ENCODE measurements at regions of chr19 and their contacts with region 1.

Region 1: DNA sequence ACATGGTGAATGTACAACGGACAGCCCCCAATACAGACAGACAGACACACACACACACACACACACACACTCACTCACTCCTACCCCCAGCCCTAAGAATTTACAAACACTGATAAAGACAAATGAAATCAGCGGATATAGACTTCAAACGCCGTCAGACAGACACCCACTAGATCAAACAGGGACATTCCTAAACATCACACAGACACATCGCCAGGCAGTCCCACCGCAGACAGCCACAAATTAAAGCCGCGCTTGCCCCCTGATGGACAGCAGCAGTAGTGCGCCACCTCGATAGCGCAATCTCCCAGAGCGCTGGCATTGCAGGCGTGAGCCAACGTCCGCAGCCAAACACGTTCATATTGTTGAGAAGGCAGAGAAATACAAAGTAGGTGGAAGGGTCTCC is 24.7 kb upstream of the ADGRE1 start:
- DNase-seq: peak; percentile 81
- ATAC-seq: peak; percentile 83
- H3K4me3 ChIP-seq: peak overlapping the region; percentile 28 to 32
- H3K27ac ChIP-seq: no peak overlapping the region
- H3K4me1 ChIP-seq: peaks cover 0 to 8% of the 10 kb centered on the region in 2 experiments; a peak in 2 of 4 replicates
- H3K27me3 ChIP-seq: no peaks in the 10 kb centered on the region
- CTCF ChIP-seq: peak; percentile 85 to 96 (median 92)
- POLR2A ChIP-seq: no peak
- RAD21 ChIP-seq: peak; percentile 99

Region 2: DNA sequence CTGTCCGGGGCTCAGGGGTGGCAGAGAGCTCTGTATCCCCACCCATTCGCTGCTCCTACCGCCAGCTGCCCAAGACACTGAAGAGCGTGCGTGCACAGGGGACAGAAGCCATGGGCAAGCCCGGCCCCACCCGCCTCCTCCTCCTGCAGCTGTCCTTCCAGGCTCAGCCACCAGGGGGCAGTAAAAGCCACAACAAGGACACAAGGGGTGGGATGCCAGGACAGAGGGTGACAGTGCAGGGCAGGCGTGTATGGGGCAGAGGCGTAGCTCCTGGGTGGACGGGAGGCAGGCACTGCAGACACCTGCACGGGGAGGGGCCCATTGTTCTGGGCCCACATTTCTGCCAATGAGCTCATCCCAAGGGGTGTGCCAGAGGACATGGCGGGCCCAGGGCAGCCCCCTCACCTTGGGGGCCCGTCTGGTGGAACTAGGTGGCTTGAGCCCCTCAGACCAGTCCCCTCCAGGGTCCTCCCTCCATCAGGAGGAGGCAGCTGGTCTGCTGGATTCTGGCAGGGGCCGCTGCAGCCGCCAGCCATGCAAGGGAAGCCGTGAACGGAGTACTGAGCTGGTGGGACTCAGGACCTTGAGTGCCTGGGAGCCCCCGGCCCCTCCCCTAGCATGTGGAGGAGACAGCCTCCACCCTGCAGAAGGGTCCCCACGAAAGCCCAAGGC is 644.0 kb before region 1 on chr19:
- CTCF ChIA-PET with region 1: interaction called, 8 read pairs
- POLR2A ChIA-PET with region 1: no interaction called
- RAD21 ChIA-PET with region 1: no interaction called
- intact Hi-C with region 1: loop called (anchors 5 kb)
- DNase-seq: peak; percentile 51
- ATAC-seq: peak; percentile 89
- H3K4me3 ChIP-seq: no peak overlapping the region
- H3K27ac ChIP-seq: no peak overlapping the region
- H3K4me1 ChIP-seq: peaks cover 0 to 8% of the 10 kb centered on the region in 2 experiments; a peak in 1 of 4 replicates
- H3K27me3 ChIP-seq: no peaks in the 10 kb centered on the region
- CTCF ChIP-seq: peak; percentile 78 to 95 (median 88); a peak in 5 of 6 replicates
- POLR2A ChIP-seq: no peak
- RAD21 ChIP-seq: peak; percentile 82

Region 3: GRCh38 chr19:6632002-6632621 is 230.6 kb before region 1 on chr19:
- CTCF ChIA-PET with region 1: interaction called, 6 read pairs
- POLR2A ChIA-PET with region 1: no interaction called
- RAD21 ChIA-PET with region 1: interaction called, 3 to 4 read pairs
- intact Hi-C with region 1: loop called (anchors 1 kb)
- DNase-seq: peak; percentile 77
- ATAC-seq: peak; percentile 71
- H3K4me3 ChIP-seq: no peak overlapping the region
- H3K27ac ChIP-seq: no peak overlapping the region
- H3K4me1 ChIP-seq: peaks cover 3 to 14% of the 10 kb centered on the region in 2 experiments; a peak in 3 of 4 replicates
- H3K27me3 ChIP-seq: no peaks in the 10 kb centered on the region
- CTCF ChIP-seq: peak; percentile 70 to 83 (median 76)
- POLR2A ChIP-seq: no peak
- RAD21 ChIP-seq: peak; percentile 80

Region 4: GRCh38 chr19:6753178-6754031 is 109.3 kb before region 1 on chr19:
- CTCF ChIA-PET with region 1: interaction called, 3 read pairs
- POLR2A ChIA-PET with region 1: no interaction called
- RAD21 ChIA-PET with region 1: no interaction called
- intact Hi-C with region 1: loop called (anchors 1 kb)
- DNase-seq: peak; percentile 91
- ATAC-seq: peak; percentile 88
- H3K4me3 ChIP-seq: peak overlapping the region; percentile 26 to 45
- H3K27ac ChIP-seq: peak overlapping the region; percentile 88
- H3K4me1 ChIP-seq: peaks cover 13 to 31% of the 10 kb centered on the region in 2 experiments; a peak in 3 of 4 replicates
- H3K27me3 ChIP-seq: no peaks in the 10 kb centered on the region
- CTCF ChIP-seq: peak in 2 of 3 experiments; percentile 25 to 43; a peak in 4 of 6 replicates
- POLR2A ChIP-seq: peak; percentile 51
- RAD21 ChIP-seq: peak; percentile 78

Region 5: DNA sequence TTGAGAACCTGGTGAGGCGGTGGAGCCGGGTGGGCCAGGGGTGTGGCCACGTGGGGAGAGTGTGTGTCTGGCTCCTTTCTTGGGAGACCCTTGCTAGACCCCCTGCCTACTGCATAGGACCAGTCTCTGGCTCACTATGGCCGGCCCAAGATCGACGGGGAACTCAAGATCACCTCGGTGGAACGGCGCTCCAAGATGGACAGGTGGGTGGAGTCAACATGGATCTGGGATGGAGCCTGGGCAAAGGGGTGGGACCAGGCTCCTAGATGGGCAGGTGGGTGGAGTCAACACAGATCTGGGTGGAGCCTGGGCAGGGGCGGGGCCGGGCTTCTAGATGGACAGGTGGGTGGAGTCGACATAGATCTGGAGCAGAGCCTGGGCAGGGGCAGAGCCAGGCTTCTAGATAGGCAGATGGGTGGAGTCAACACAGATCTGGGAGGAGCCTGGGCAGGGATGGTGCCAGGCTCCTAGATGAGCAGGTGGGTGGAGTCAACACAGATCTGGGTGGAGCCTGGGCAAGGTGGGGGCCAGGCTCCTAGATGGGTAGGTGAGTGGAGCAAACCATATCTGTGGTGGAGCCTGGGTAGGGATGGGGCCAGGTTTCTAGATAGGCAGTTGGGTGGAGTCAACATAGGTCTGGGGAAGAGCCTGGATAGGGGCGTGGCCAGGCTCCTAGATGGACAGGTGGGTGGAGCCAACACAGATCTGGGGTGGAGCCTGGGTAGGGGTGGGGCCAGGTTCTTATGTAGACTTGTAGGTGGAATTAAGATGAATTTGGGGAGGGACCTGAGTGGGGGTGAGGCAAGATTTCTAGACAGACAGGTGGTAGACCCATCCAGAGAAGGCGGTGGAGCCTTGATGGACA is 33.7 kb before region 1 on chr19:
- CTCF ChIA-PET with region 1: interaction called, 7 read pairs
- POLR2A ChIA-PET with region 1: no interaction called
- RAD21 ChIA-PET with region 1: interaction called, 3 to 5 read pairs
- intact Hi-C with region 1: loop called (anchors 2 kb)
- DNase-seq: peak; percentile 98
- ATAC-seq: peak; percentile 84
- H3K4me3 ChIP-seq: peak overlapping the region; percentile 79 to 84
- H3K27ac ChIP-seq: peak overlapping the region; percentile 67
- H3K4me1 ChIP-seq: peaks cover 14 to 24% of the 10 kb centered on the region in 2 experiments
- H3K27me3 ChIP-seq: no peaks in the 10 kb centered on the region
- CTCF ChIP-seq: no peak
- POLR2A ChIP-seq: no peak
- RAD21 ChIP-seq: no peak

Region 6: DNA sequence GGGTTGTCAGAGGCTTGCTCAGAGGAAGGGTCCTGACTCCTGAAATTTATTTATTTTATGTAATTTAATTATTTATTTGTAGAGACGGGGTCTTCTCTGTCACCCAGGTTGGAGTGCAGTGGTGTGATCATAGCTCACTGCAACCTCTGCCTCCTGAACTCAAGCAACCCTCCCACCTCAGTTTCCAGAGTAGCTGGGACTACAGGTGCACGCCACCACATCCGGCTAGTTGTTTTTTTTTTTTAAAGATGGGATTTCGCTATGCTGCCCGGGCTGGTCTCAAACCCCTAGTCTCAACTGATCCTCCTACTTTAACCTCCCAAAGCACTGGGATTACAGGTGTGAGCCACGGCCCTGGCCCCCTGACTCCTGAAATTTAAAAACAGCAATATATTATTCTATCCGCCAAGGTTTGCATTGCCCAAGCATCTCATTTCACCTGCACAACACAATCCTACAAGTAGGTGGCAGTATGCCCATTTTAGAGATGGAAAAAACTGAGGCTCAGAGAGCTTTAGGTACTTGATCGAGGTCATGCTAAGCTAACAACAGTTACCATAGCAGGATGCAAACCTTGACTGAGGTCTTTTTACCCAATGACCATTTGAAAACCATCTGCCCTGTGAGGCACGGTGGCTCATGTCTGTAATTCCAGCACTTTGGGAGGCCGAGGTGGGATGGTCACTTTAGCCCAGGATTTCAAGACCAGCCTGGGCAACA is 504.2 kb after region 1 on chr19:
- CTCF ChIA-PET with region 1: no interaction called
- POLR2A ChIA-PET with region 1: no interaction called
- RAD21 ChIA-PET with region 1: no interaction called
- intact Hi-C with region 1: no loop called
- DNase-seq: peak; percentile 62
- ATAC-seq: peak; percentile 67
- H3K4me3 ChIP-seq: no peak overlapping the region
- H3K27ac ChIP-seq: no peak overlapping the region
- H3K4me1 ChIP-seq: peaks cover 17 to 24% of the 10 kb centered on the region in 2 experiments
- H3K27me3 ChIP-seq: peaks cover 8% of the 10 kb centered on the region; the same call in 1 of the 2 replicates
- CTCF ChIP-seq: peak; percentile 37 to 53 (median 52); a peak in 5 of 6 replicates
- POLR2A ChIP-seq: no peak
- RAD21 ChIP-seq: peak; percentile 64

Measured in HCT116 (cell line).